Activated CD4-positive, alpha-beta T cell treated with anti-CD3 and anti-CD28 coated beads, Interleukin-2, amount 10 ng/mL, durations not matched to agents 24 days and 14 days (primary cell): ENCODE measurements at regions of chr10 and their contacts with region 1.

Region 1: DNA sequence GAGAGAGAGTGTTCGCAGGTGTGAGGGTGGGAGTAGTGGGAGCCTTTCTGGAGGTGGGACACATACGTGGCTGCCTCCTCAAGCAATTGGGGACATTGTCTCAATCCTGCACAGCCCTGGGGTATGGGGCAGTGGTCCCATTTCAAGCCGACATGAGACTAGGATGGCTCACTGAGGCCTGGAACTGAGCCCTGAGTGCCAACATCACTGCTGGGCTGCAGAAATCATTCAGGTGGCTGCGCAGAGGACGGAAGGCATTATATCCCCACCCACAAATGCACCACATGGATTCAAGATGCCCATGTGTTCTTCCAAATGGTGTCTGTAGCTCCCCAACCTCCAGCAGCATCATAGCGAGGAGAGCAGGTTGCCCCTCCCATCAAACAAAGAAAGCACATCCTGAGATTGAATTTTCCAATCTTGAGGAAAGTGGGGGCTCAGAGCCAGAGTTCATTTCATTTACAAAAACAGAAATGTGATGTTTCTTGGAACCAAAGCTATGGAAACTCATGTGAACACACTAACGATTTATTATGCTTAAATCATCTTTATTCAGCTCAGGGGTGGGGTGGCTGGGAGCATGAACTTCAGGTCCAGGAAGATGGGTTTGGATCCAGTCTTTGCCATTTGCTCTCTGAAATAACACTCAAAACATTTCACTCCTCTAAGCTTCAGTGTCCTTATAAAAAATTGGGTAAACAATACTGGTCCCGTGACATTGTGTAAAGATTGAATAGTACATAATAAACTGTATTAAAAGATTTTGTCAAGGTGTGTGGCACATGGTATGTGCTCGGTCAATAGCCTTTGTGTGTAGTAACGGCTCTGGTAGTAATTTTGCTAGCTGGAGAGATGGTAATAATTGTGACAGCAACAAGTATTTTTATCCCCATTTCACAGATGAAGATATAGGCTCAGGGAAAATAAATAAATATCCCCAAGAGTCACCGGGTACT is 4.6 kb downstream of the SFTPA2 start:
- DNase-seq: no peak
- H3K4me3 Mint-ChIP-seq: no peak overlapping the region
- H3K27ac Mint-ChIP-seq: no peak overlapping the region
- H3K4me1 Mint-ChIP-seq: peaks cover 7% of the 10 kb centered on the region
- H3K27me3 Mint-ChIP-seq: peaks cover 1% of the 10 kb centered on the region

Region 2: DNA sequence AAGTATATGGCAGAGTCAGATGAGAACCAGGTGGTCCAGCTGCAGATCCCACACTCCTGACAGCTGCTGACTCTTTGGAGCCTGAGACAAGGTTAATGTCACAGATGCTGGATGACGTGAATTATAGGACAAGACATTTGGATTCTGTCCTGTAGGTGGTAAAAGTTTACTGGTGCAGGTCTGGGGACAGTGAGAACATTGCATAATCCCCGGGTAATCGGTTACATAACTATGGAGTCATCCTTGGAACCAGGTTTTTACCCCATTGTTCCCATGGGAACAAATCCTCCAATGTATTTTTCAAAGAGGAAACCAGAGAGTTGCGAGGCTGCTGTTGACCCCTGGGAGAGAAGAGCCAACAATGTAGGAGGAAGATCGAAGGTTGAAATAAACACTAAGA is 82.7 kb before region 1 on chr10:
- intact Hi-C with region 1: no loop called
- DNase-seq: no peak
- H3K4me3 Mint-ChIP-seq: no peak overlapping the region
- H3K27ac Mint-ChIP-seq: no peak overlapping the region
- H3K4me1 Mint-ChIP-seq: no peaks in the 10 kb centered on the region
- H3K27me3 Mint-ChIP-seq: peaks cover 37% of the 10 kb centered on the region

Region 3: GRCh38 chr10:79615577-79615976 is 59.9 kb after region 1 on chr10:
- intact Hi-C with region 1: loop called (anchors 2 kb)
- DNase-seq: no peak
- H3K4me3 Mint-ChIP-seq: no peak overlapping the region
- H3K27ac Mint-ChIP-seq: no peak overlapping the region
- H3K4me1 Mint-ChIP-seq: no peaks in the 10 kb centered on the region
- H3K27me3 Mint-ChIP-seq: peaks cover 28% of the 10 kb centered on the region